ENCODE measurements at regions of chr2 and their contacts with region 1.

Region 1: GRCh38 chr2:99559075-99559662 is 69.4 kb upstream of the REV1 start:
- DNase-seq: peak; percentile 93
- ATAC-seq: peak; percentile 97

Region 2: GRCh38 chr2:100242891-100243619 is 683.9 kb after region 1 on chr2:
- intact Hi-C with region 1: loop called (anchors 5 kb)
- DNase-seq: peak; percentile 84
- ATAC-seq: peak; percentile 93

Measured in left ventricle myocardium superior (tissue), 1 donor.